ENCODE measurements at regions of chr14 and their contacts with region 1.

Region 1: DNA sequence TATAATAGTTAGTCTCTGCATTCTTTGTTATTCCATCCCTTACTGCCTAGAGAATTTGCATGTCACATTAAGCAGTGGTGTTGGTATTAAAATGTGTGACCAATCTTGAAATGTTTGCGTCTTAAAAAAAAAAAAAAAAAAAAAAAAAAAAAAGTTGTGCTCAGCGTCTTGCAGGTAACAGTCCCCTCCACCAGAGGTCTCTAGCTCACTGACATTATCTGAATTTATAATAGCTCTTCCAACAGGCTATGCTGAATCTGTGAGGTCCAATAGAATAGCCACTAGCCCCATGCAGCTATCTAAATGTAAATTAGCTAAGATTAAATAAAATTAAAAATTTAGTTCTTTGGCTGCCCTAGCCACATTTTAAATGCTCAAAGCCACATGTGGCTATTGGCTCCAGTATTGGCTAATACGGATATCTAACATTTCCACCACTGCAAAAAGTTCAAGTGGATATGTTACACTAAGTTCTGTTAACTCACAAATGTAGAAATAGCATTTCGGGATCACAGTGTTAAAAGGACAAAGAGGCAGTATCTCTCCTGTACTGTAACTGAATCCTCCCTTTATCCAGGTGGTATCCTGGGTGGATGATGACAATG is 28.7 kb downstream of the NKX2-8 start:
- DNase-seq: peak; percentile 41
- CTCF ChIP-seq: peak; percentile 66

Region 2: DNA sequence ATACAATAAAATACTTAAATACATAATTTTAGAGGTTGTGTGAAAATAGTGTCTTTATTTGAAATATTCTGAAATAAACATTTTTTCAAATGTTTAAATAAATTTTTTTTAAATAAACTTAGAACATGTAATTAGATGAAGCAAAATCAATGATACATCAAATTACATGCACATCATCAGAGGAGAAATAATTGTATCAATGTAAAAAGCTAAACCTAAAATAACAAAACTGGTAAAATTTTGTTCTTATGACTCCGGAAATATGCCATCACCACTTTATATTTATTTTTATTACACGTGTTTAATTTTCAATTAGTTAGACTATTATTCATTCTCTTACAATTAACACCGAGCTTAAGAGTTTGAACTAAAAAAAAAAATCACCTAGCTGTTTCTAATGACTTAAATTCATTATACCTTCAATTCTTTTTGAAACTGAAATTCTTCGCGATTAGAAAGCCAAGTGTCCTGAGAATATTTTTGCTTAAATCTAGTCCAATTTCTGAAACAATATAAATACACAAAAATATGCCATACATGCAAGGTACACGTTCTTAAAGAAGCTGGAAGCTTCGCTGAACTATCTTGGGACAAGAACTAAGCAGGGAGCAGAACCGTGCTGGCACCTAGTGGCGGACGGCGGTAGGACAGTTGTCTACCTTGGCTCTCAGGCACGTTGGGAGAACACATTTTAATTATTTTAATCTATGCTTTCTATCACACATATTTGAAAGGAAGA is 388.2 kb after region 1 on chr14:
- in situ Hi-C with region 1: loop called (anchors 25 kb)
- DNase-seq: peak; percentile 26
- CTCF ChIP-seq: peak; percentile 95

Measured in GM13977 (cell line).